Endothelial cell of umbilical vein (primary cell): ENCODE measurements at regions of chr2 and their contacts with region 1.

Region 1: GRCh38 chr2:152175458-152176325 is at the start of gene STAM2:
- DNase-seq: peak; percentile 95
- H3K4me3 ChIP-seq: peak within 1 kb of the TSS; percentile 88 to 95 (median 93)
- H3K27ac ChIP-seq: peak within 1 kb of the TSS; percentile 95
- H3K4me1 ChIP-seq: peaks cover 12% of the 10 kb centered on the region
- H3K27me3 ChIP-seq: peaks cover 0 to 3% of the 10 kb centered on the region in 2 experiments
- CTCF ChIP-seq: peak; percentile 97 to 99
- POLR2A ChIP-seq: peak; percentile 93
- total RNA-seq, gene STAM2: 25.7 and 27.5 TPM in 2 replicates

Region 2: DNA sequence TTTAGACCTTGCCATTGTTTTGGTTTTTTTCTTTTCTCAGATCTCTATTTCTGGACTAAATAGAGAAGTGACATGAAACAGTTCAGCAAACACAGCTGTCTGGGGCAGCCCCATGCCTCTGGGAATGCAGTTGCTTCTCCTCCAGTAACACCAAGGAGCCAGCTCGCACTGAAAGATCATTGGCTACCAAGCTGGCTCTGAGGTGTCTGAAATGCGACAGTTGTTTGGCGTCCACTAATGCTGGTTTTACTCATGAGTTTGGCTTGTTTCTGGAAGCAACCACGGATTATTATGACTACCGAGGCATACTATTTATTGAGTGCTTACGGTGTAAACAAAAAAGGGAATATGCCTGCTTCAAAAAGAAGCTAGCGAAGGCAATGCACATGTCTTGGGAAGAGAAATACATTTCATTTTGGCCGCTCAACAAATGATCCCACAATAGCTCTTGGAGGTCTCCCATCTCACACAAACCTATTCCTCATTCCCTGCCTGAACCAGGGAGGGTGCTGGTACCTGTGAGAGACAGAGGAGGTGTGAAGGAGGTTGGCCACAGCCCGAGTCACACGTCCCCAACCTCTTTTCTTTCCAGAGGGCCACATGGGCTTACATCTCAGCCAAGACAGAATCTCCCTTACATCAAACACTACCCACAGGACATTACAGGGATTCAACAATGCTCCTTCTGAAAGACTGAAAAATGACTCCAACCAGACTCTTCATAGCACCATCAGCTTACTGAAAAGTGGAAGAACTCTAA is 403.9 kb before region 1 on chr2:
- CTCF ChIA-PET with region 1: no interaction called
- POLR2A ChIA-PET with region 1: no interaction called
- dilution Hi-C with region 1: no loop called
- intact Hi-C with region 1: no loop called
- DNase-seq: no peak
- H3K4me3 ChIP-seq: no peak overlapping the region
- H3K27ac ChIP-seq: no peak overlapping the region
- H3K4me1 ChIP-seq: peaks cover 17% of the 10 kb centered on the region
- H3K27me3 ChIP-seq: no peaks in the 10 kb centered on the region
- CTCF ChIP-seq: no peak
- POLR2A ChIP-seq: no peak

Region 3: GRCh38 chr2:152036611-152037469 is 138.9 kb before region 1 on chr2:
- CTCF ChIA-PET with region 1: interaction called, 7 read pairs
- POLR2A ChIA-PET with region 1: no interaction called
- dilution Hi-C with region 1: no loop called
- intact Hi-C with region 1: loop called (anchors 2 kb)
- DNase-seq: peak; percentile 75
- H3K4me3 ChIP-seq: no peak overlapping the region
- H3K27ac ChIP-seq: no peak overlapping the region
- H3K4me1 ChIP-seq: peaks cover 3% of the 10 kb centered on the region
- H3K27me3 ChIP-seq: peaks cover 4% of the 10 kb centered on the region in 2 experiments
- CTCF ChIP-seq: peak; percentile 75 to 76
- POLR2A ChIP-seq: no peak

Region 4: DNA sequence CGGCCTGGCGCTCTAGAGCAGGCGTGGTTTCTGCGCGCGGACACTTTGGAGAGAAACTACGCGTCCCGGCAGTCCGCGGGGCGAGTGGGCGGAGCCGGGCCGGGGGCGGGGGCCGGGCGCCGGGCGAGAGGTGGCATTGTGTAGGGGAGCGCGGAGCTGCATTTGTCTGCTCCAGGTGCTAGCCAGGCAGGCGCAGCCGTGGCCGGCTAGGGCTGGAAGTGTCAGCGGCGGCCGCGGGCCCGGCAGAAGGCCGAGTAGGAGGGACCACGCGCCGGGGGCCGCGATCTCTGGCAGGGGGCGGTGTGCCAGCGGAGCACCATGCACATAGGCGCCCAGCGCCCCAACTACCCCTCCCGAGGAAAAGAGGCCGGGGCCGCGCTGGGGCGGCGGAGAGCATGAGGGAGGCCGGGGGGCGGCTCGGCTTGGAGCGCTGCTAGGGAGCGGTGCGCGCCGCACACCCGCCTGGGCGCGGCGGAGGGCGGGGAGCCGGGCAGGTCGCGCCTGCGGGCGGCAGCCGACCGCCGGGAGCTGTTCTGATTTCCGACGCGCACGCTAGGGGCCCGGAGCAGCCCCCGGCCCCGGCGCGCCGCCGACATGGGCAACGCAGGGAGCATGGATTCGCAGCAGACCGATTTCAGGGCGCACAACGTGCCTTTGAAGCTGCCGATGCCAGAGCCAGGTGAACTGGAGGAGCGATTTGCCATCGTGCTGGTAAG is 159.5 kb after region 1 on chr2 and contains the start of gene FMNL2:
- CTCF ChIA-PET with region 1: interaction called, 3 read pairs
- POLR2A ChIA-PET with region 1: interaction called, 5 read pairs
- dilution Hi-C with region 1: no loop called
- intact Hi-C with region 1: loop called (anchors 1 kb)
- DNase-seq: peak; percentile 89
- H3K4me3 ChIP-seq: peak within 1 kb of the TSS; percentile 81 to 96 (median 95)
- H3K27ac ChIP-seq: peak within 1 kb of the TSS; percentile 32
- H3K4me1 ChIP-seq: peaks cover 16% of the 10 kb centered on the region
- H3K27me3 ChIP-seq: no peaks in the 10 kb centered on the region
- CTCF ChIP-seq: peak in 1 of 2 donors; percentile 0
- POLR2A ChIP-seq: peak; percentile 88
- total RNA-seq, gene FMNL2: 25.5 and 28.0 TPM in 2 replicates

Region 5: DNA sequence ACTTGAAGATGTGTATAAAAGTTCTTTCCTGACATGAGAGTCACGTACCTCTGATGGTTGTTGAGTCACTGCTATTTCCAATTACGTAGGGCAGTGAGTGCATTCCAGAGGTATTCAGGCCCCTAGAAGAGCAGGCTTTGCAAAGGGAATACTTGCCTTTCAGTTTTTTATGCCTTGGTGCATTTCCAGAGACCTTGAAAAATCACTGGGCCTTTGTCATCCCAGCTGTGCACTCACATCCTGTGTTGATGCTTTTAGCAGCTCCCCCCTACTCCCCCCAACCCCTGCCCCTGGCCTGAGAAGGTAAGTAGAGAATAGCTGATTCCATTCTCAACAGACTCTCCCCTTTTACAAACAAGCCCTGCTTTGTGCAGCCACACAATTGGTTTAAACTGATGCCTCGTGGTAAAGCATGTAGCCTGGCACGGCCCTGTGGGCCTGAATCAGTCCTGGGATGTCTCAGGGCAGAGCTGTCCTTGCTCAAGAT is 367.3 kb after region 1 on chr2:
- CTCF ChIA-PET with region 1: interaction called, 5 read pairs
- POLR2A ChIA-PET with region 1: no interaction called
- dilution Hi-C with region 1: no loop called
- intact Hi-C with region 1: loop called (anchors 5 kb)
- DNase-seq: peak; percentile 93
- H3K4me3 ChIP-seq: no peak overlapping the region
- H3K27ac ChIP-seq: peak overlapping the region; percentile 89
- H3K4me1 ChIP-seq: peaks cover 26% of the 10 kb centered on the region
- H3K27me3 ChIP-seq: no peaks in the 10 kb centered on the region
- CTCF ChIP-seq: no peak
- POLR2A ChIP-seq: no peak

Region 6: DNA sequence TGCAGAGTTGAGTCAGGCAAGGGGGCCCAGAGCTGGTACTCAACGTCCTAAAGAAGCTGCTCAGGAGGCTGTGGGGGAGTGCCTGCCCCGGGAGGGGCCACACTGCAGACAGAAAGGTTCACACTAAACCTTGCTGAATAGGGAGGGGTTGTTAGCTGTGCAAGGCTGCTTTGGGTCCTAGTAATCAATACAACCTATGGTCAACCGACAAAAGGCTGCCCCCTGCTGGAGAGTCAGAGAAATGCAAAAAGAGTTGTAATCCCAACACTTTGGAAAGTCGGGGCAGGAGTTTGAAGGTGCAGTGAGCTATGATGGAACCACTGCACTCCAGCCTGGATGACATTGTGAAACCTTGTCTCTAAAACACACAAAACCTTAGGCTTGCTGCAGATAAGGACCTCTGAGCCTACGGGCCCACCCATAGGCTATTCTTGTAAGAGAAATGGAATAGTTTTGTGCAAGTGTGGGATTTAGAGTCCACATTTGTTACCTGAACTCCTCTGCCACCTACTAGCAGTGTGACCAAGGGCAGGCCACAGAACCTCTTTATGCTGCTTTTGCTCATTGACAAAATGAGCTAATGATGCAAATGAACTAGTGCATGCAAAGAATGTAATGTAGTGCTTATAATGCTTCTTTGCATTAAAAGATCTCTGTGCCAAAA is 460.1 kb after region 1 on chr2:
- CTCF ChIA-PET with region 1: interaction called, 82 read pairs
- POLR2A ChIA-PET with region 1: interaction called, 3 read pairs
- dilution Hi-C with region 1: no loop called
- intact Hi-C with region 1: loop called (anchors 1 kb)
- DNase-seq: peak; percentile 58
- H3K4me3 ChIP-seq: no peak overlapping the region
- H3K27ac ChIP-seq: no peak overlapping the region
- H3K4me1 ChIP-seq: no peaks in the 10 kb centered on the region
- H3K27me3 ChIP-seq: no peaks in the 10 kb centered on the region
- CTCF ChIP-seq: peak; percentile 74 to 81
- POLR2A ChIP-seq: no peak

Region 7: GRCh38 chr2:152717228-152718075 is 541.8 kb after region 1 on chr2 and contains the start of gene PRPF40A:
- CTCF ChIA-PET with region 1: no interaction called
- POLR2A ChIA-PET with region 1: no interaction called
- dilution Hi-C with region 1: no loop called
- intact Hi-C with region 1: loop called (anchors 1 kb)
- DNase-seq: peak; percentile 99
- H3K4me3 ChIP-seq: peak within 1 kb of the TSS; percentile 72 to 99 (median 87)
- H3K27ac ChIP-seq: peak within 1 kb of the TSS; percentile 85
- H3K4me1 ChIP-seq: peaks cover 17% of the 10 kb centered on the region
- H3K27me3 ChIP-seq: no peaks in the 10 kb centered on the region
- CTCF ChIP-seq: no peak
- POLR2A ChIP-seq: peak; percentile 45
- total RNA-seq, gene PRPF40A: 99.5 and 123 TPM in 2 replicates

Region 8: DNA sequence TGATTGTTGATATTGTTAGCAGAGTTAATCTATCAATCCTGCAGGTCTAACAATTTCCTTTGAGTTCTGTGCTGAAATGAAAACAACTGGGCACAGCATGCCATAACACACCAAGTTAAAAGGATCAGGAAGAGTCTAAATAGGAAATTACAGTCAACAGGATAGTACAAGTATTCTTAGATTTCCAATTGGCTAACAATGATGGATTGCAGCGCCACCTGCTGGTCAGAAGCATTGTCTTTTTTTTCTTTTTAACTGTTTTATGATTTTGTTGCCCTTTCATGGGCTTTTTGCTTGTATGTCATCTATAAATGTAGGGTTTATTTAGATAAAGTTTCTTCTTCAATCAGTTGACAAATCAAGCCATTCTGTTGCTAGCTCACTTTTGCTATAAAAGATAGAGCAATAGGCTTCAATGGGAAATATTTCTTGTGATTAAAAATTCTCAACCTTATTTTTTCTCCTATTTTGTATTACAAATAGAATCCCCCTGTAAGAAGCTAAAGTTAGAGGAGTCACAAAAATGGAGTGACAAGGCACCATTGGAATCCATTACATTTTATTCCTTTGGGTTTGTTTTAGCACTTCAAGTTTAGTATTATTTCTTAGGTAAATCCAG is 1343.7 kb after region 1 on chr2:
- CTCF ChIA-PET with region 1: no interaction called
- POLR2A ChIA-PET with region 1: no interaction called
- dilution Hi-C with region 1: no loop called
- intact Hi-C with region 1: loop called (anchors 10 kb)
- DNase-seq: peak; percentile 48
- H3K4me3 ChIP-seq: no peak overlapping the region
- H3K27ac ChIP-seq: no peak overlapping the region
- H3K4me1 ChIP-seq: no peaks in the 10 kb centered on the region
- H3K27me3 ChIP-seq: no peaks in the 10 kb centered on the region
- CTCF ChIP-seq: peak; percentile 49 to 58
- POLR2A ChIP-seq: no peak